Lower leg skin (tissue), 4 donors: ENCODE measurements at regions of chr14 and their contacts with region 1.

Region 1: GRCh38 chr14:63727774-63728728 is at the start of gene SGPP1:
- DNase-seq: peak; percentile 63 to 92
- H3K4me3 ChIP-seq: peak within 1 kb of the TSS; percentile 94
- CTCF ChIP-seq: peak in 1 of 3 donors; percentile 29
- POLR2A ChIP-seq: no peak
- total RNA-seq, gene SGPP1: 5.9 to 13.9 (median 6.8) TPM

Region 2: DNA sequence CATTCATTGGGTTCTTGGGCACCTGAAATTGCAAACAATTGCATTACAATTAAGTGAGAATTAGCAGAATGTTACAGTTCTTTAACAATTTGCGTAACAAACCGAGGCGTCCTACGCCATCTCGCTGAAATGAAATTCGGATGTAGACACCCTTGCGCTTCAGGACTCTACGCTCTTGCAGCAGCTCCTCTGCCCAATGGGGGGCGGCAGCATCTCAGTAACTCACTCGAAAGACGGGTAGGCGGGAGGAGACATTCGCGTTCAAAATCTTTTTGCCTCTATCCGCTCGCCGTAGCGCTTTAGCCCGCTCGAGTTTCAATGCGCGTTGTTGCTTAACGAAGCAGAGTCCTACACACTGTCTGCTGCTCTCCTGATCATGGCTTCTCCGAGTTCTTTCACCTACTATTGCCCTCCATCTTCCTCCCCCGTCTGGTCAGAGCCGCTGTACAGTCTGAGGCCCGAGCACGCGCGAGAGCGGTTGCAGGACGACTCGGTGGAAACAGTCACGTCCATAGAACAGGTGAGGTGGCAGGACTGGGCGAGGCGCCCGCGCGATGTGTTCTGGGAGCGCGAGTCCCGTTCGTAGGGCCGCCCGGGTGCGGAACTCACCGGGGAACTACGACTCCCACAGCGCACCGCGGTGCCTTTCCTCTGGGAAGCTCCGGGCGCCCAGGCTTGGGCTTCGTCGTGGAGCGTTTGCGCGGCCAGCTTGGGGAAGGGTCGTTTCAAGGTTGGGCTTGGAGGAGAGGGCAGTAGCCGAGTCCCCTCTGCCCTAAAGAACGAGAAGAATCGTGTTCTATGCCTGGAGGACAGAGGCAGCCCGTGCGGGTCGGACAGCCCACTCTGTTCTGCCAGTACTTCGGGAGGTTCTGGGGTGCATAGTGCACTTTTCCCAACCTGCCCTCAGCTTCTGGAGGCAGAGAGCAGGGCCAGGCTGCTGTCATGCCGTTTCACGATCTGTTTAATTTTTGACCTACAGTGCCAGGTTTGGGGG is 1258.8 kb after region 1 on chr14 and contains the start of gene FNTB:
- intact Hi-C with region 1: loop called (anchors 5 kb)
- DNase-seq: peak; percentile 94 to 99
- H3K4me3 ChIP-seq: peak within 1 kb of the TSS; percentile 71
- CTCF ChIP-seq: peak in 1 of 3 donors; percentile 59
- POLR2A ChIP-seq: no peak
- total RNA-seq, gene FNTB: 34.0 to 48.6 (median 38.8) TPM